CD4-positive, alpha-beta memory T cell (primary cell): ENCODE measurements at regions of chr10 and their contacts with region 1.

Region 1: DNA sequence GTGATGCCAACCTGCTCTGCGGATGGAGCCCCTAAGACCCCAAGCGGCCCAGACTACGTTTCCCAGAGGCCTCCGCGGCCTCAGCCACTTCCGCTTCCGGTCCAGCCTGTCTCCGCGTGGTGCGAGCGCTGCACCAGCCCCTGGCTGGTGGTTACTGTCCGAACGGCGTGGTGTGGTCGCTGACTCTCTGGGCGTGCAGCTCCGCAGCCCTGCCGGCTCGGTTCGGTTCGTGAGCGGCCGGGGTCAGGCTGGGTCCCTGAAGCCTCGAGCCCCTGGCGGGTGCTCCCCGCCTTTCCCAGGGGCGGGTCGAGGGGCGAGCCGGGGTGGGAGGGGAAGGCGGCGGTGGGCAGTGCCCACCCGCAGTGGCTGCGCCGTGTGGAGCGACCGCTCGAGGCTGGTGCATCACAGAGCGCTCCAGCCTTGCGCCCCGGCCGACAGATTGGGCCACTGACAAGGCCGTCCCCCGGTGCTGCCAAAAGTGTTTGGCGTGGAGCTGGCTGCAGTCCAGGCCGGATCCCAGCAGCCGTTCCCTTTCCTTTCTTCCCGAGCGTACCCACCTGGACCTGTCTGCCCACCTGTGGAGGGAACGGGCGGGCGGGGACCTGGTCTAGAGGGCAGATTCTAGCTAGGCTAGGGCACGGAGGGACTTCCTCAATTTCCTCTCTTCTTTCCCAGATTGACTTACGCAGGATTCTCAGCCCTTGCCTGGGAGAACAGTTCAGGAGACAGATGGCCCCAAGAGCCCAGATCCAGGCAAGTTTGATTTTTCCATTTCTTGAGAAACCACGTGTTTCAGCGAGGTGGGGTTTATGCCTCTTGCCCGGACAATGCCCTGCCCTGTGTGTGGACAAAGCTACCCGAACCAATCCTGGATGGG is at the start of gene ZNF485:
- DNase-seq: peak; percentile 41 to 61 (median 56)
- H3K4me3 ChIP-seq: peak within 1 kb of the TSS; percentile 58 to 59
- H3K4me3 Mint-ChIP-seq: peak within 1 kb of the TSS; percentile 81 to 88 (median 86)
- H3K27ac ChIP-seq: peak within 1 kb of the TSS; percentile 52
- H3K27ac Mint-ChIP-seq: peak within 1 kb of the TSS; percentile 70 to 95 (median 86)
- H3K4me1 ChIP-seq: peaks cover 12% of the 10 kb centered on the region
- H3K4me1 Mint-ChIP-seq: peaks cover 17 to 45% (median 30%) of the 10 kb centered on the region in 4 donors
- H3K27me3 ChIP-seq: no peaks in the 10 kb centered on the region
- H3K27me3 Mint-ChIP-seq: no peaks in the 10 kb centered on the region
- total RNA-seq, gene ZNF485: 9.0 to 10.4 TPM

Region 2: DNA sequence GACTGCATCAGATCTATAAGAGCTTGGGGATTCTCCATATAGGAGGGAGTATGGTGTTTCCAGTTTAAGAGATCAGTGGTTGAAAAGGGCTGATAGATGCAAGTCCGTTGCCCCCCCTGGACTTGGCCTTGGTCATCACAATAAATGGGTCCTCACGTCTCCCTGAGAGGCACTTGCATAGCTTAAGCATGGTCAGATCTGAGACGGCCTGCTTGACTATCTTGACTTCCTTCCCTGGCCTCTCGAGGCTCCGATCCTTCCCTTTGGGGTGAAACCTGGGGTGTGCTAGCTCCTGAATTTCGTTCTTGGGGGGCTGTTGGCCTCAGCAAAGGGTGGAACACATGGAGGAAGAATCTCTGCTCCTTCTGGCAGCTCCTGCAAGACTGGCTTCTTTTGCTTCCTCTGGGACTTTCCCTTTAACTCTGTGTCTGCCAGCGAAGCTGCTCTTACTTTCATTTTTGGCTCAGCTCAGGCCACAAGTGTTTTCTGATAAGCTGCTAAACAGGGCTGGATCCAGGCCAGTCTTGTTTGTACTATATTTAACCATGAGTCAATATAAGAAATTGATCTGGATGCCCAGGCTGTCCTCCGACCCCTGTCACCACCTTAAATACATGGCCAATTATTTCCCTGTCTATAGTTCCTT is 11.5 kb before region 1 on chr10:
- CTCF ChIA-PET with region 1: interaction called, 11 read pairs
- POLR2A ChIA-PET with region 1: interaction called, 5 read pairs
- intact Hi-C with region 1: no loop called
- DNase-seq: peak in 4 of 5 donors; percentile 29 to 57 (median 46)
- H3K4me3 ChIP-seq: peak overlapping the region; percentile 21 to 44
- H3K4me3 Mint-ChIP-seq: peak overlapping the region; percentile 81 to 95 (median 89)
- H3K27ac ChIP-seq: peak overlapping the region; percentile 34
- H3K27ac Mint-ChIP-seq: peak overlapping the region; percentile 70 to 95 (median 89)
- H3K4me1 ChIP-seq: peaks cover 25% of the 10 kb centered on the region
- H3K4me1 Mint-ChIP-seq: peaks cover 23 to 32% (median 26%) of the 10 kb centered on the region in 4 donors
- H3K27me3 ChIP-seq: no peaks in the 10 kb centered on the region
- H3K27me3 Mint-ChIP-seq: peaks cover 0 to 1% of the 10 kb centered on the region in 2 donors